GM12878 (cell line): ENCODE measurements at regions of chr10 and their contacts with region 1.

Region 1: GRCh38 chr10:95841661-95842498 is 65.9 kb upstream of the CC2D2B start:
- DNase-seq: no peak
- ATAC-seq: peak; percentile 53
- H3K4me3 ChIP-seq: no peak overlapping the region
- H3K27ac ChIP-seq: peak overlapping the region; percentile 98
- H3K4me1 ChIP-seq: peaks cover 43% of the 10 kb centered on the region
- H3K27me3 ChIP-seq: no peaks in the 10 kb centered on the region
- CTCF ChIP-seq: peak; percentile 37 to 71 (median 58); a peak in 4 of 6 replicates
- EP300 ChIP-seq: peak in 1 of 2 experiments; percentile 45; a peak in 1 of 4 replicates
- POLR2A ChIP-seq: no peak
- RAD21 ChIP-seq: peak; percentile 77

Region 2: DNA sequence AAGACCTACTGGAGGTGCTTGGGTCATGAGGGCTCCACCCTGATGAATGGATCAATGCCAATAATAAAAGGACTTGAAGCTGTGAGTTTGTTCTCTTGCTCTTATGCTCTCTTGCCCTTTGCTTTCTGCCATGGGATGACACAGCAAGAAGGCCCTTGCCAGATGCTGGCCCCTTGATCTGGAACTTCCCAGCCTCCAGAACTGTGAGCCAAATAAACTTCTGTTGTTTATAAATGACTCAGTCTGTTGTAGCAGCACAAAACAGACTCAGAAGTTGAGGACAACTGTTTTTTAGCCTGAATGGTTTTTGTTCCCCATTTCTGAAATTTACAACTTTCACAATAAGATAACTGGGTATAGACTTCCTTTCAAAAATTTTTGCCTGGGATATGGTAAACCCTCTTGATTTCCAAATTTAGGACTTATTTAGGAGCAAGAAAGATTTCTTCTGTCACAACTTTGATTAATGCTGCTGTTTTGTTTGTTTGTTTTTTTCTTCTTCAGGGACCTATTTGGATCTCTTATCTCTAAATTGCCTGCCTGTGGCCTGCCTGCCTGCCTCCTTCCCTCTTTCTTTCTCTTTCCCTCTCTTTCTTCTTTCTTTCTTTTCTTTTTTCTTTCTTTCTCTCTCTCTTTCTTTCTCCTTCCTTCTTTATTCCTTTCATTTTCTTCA is 73.9 kb before region 1 on chr10:
- CTCF ChIA-PET with region 1: interaction called, 3 read pairs
- POLR2A ChIA-PET with region 1: interaction called, 313 read pairs
- RAD21 ChIA-PET with region 1: interaction called, 374 read pairs
- SMC1A ChIA-PET with region 1: interaction called, 5 read pairs
- in situ Hi-C with region 1: loop called (anchors 10 kb)
- intact Hi-C with region 1: no loop called
- DNase-seq: no peak
- ATAC-seq: peak; percentile 87
- H3K4me3 ChIP-seq: peak overlapping the region; percentile 19; the same call in 1 of the 2 replicates
- H3K27ac ChIP-seq: peak overlapping the region; percentile 94
- H3K4me1 ChIP-seq: peaks cover 34% of the 10 kb centered on the region
- H3K27me3 ChIP-seq: no peaks in the 10 kb centered on the region
- CTCF ChIP-seq: no peak
- EP300 ChIP-seq: peak; percentile 33 to 73; a peak in 3 of 4 replicates
- POLR2A ChIP-seq: no peak
- RAD21 ChIP-seq: peak; percentile 28; the same call in 1 of the 2 replicates

Region 3: GRCh38 chr10:95792874-95793285 is 49.0 kb before region 1 on chr10:
- CTCF ChIA-PET with region 1: interaction called, 99 read pairs
- POLR2A ChIA-PET with region 1: interaction called, 451 read pairs
- RAD21 ChIA-PET with region 1: interaction called, 268 read pairs
- SMC1A ChIA-PET with region 1: interaction called, 795 read pairs
- in situ Hi-C with region 1: no loop called
- intact Hi-C with region 1: no loop called
- DNase-seq: peak; percentile 77
- ATAC-seq: peak; percentile 31
- H3K4me3 ChIP-seq: peak overlapping the region; percentile 18; the same call in 1 of the 2 replicates
- H3K27ac ChIP-seq: peak overlapping the region; percentile 93
- H3K4me1 ChIP-seq: peaks cover 64% of the 10 kb centered on the region
- H3K27me3 ChIP-seq: no peaks in the 10 kb centered on the region
- CTCF ChIP-seq: no peak
- EP300 ChIP-seq: peak; percentile 54; a peak in 1 of 4 replicates
- POLR2A ChIP-seq: no peak
- RAD21 ChIP-seq: 0 out of 2 replicates have a peak, but pooled peaks have one; percentile 4

Region 4: DNA sequence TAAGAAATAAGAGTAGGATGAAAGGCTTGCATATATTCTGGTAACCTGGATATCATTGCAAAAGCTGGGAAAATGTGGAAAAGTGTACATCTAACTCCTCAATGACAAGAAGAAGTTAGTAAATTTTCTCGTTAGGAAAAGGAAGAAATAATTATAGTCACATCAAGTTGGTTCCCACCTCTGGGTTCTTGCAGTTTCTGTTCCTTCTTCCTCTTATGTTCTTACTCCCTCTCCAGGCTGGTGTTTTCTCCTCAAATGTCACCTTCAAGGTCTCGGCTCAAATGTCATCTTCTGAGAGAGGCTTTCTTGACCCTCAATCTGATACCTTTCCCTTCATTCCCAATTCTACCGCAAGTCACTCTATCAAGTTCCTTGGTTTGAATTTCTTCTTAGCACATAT is 21.5 kb before region 1 on chr10:
- CTCF ChIA-PET with region 1: interaction called, 32 read pairs
- POLR2A ChIA-PET with region 1: interaction called, 176 read pairs
- RAD21 ChIA-PET with region 1: interaction called, 260 read pairs
- SMC1A ChIA-PET with region 1: interaction called, 359 read pairs
- in situ Hi-C with region 1: no loop called
- intact Hi-C with region 1: no loop called
- DNase-seq: no peak
- ATAC-seq: peak; percentile 76
- H3K4me3 ChIP-seq: no peak overlapping the region
- H3K27ac ChIP-seq: peak overlapping the region; percentile 85
- H3K4me1 ChIP-seq: peaks cover 41% of the 10 kb centered on the region
- H3K27me3 ChIP-seq: no peaks in the 10 kb centered on the region
- CTCF ChIP-seq: peak in 1 of 3 experiments; percentile 35; a peak in 2 of 6 replicates
- EP300 ChIP-seq: peak in 1 of 2 experiments; percentile 60; a peak in 2 of 4 replicates
- POLR2A ChIP-seq: no peak
- RAD21 ChIP-seq: peak; percentile 51

Region 5: DNA sequence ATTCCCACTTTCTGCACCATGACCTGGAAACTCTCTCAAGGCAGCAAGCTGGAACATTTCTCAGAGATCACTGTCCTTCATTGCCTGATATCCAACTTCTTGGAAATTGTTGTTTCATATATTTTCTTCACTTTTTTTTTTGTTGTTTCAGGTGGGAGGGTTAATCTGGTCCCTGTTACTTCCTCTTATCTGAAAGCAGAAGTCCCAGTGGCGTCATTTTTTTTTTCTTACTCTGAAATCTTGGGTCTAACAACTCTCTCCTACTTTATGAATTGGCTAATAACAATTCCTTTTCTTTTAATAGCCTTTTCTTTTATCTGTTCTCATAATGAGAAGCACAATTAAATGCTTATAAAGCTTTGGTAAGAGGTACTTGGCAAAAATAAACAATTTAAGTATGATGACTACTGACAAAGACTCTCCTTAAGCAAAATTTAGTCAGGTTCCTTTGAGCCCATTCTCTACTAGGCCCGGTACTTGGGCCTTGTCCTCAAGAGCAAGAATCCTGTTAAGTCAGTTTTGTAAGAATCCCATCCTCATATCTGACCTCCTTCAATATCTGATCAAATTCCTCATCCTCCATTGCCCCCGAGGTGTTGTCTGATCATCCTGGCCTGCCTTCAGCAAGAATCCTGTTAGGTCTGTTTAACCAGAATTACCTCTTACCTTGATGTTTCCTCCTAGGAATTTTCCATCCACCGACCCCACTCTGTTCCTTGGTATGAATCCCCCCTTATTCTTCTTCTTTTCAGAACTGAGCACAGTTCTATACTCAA is 54.4 kb after region 1 on chr10:
- CTCF ChIA-PET with region 1: no interaction called
- POLR2A ChIA-PET with region 1: no interaction called
- RAD21 ChIA-PET with region 1: no interaction called
- SMC1A ChIA-PET with region 1: no interaction called
- in situ Hi-C with region 1: no loop called
- intact Hi-C with region 1: no loop called
- DNase-seq: no peak
- ATAC-seq: no peak
- H3K4me3 ChIP-seq: no peak overlapping the region
- H3K27ac ChIP-seq: no peak overlapping the region
- H3K4me1 ChIP-seq: no peaks in the 10 kb centered on the region
- H3K27me3 ChIP-seq: no peaks in the 10 kb centered on the region
- CTCF ChIP-seq: no peak
- EP300 ChIP-seq: no peak
- POLR2A ChIP-seq: no peak
- RAD21 ChIP-seq: no peak

Region 6: GRCh38 chr10:96287392-96288105 is 445.7 kb after region 1 on chr10:
- CTCF ChIA-PET with region 1: interaction called, 3 read pairs
- POLR2A ChIA-PET with region 1: no interaction called
- RAD21 ChIA-PET with region 1: interaction called, 4 read pairs
- SMC1A ChIA-PET with region 1: interaction called, 5 read pairs
- in situ Hi-C with region 1: no loop called
- intact Hi-C with region 1: loop called (anchors 5 kb)
- DNase-seq: peak; percentile 93
- ATAC-seq: peak; percentile 81
- H3K4me3 ChIP-seq: peak overlapping the region; percentile 70
- H3K27ac ChIP-seq: peak overlapping the region; percentile 92
- H3K4me1 ChIP-seq: peaks cover 50% of the 10 kb centered on the region
- H3K27me3 ChIP-seq: no peaks in the 10 kb centered on the region
- CTCF ChIP-seq: no peak
- EP300 ChIP-seq: peak; percentile 78 to 96; a peak in 3 of 4 replicates
- POLR2A ChIP-seq: no peak; the same call in 1 of the 2 replicates
- RAD21 ChIP-seq: 0 out of 2 replicates have a peak, but pooled peaks have one; percentile 29